Ovary (tissue), 10 donors: ENCODE measurements at regions of chr20 and their contacts with region 1.

Region 1: DNA sequence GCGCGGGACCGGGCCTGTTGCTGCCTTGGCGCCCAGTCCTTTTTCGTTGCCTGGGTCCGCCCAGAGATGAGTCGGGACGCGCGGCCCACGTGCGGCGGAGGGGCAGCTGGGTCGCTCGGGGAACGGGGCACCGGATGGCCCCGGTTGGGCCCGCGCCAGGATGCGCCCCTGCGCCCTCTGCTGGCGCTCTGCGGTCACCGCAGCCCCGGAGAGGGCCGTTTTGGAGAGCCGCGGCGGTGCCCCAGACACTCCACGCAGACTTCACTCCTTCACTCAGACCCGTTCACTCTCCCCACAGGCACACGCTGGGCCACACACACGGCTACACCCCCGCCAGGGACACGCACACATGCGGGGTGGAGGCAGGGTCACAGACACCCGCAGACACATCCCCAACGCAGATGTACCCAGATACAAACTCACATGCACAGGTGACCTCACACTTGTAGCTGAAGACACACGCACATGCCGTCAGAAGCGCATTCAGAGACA is 38.8 kb downstream of the SRC start:
- DNase-seq: peak; percentile 69 to 88 (median 73)
- H3K4me3 ChIP-seq: peak overlapping the region; percentile 37
- H3K27ac ChIP-seq: peak overlapping the region in 1 of 2 donors; percentile 43
- H3K4me1 ChIP-seq: peaks cover 10% of the 10 kb centered on the region
- H3K27me3 ChIP-seq: no peaks in the 10 kb centered on the region
- CTCF ChIP-seq: peak; percentile 76 to 95 (median 94)
- EP300 ChIP-seq: no peak
- POLR2A ChIP-seq: peak; percentile 11

Region 2: GRCh38 chr20:37192137-37192854 is 192.4 kb before region 1 on chr20:
- intact Hi-C with region 1: loop called in 1 of 4 experiments (anchors 10 kb)
- DNase-seq: peak; percentile 84 to 92 (median 90)
- H3K4me3 ChIP-seq: no peak overlapping the region
- H3K27ac ChIP-seq: no peak overlapping the region
- H3K4me1 ChIP-seq: peaks cover 1% of the 10 kb centered on the region
- H3K27me3 ChIP-seq: no peaks in the 10 kb centered on the region
- CTCF ChIP-seq: peak; percentile 79 to 90 (median 84)
- EP300 ChIP-seq: no peak
- POLR2A ChIP-seq: no peak

Region 3: DNA sequence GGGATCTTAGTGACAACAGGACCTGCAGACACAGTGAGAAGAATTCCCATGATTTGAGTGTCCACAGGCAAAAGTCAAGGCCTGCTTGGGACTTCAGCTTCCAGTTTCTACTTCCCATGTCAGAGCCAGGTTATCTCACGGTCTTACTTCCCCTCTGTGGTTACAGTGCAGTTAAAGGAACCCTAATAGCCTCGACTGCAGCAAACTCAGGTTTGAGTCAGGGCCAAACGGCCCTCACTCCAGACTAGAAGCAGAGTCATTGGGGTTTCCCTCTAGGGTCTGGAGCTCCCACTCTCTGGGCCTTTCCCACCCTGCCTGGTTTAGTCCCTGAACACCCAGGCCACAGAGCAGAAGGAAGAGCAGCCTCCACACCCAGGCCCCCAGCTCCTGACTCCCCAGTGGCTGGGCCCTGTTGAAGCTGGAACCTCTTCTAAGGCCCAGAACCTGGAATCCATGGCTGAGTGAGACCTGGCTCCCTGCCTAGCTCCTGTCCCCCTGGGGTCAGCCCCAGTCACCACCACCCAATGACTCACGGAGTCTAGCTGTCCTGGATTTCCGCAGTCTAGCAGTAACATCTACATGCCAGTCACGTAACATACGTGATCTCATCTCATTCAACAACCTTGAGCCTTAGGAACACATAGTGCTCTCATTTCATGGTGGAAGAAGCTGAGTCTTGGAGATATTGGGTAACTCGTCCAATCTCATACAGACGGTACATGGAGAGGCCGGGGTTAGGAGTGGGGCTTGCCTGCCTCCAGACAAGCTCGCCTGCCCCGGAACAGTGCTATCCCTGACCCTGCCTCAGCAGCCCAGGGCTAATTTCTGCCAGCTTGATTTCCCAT is 113.9 kb before region 1 on chr20:
- intact Hi-C with region 1: loop called in 1 of 4 experiments (anchors 2 kb)
- DNase-seq: peak in 1 of 5 donors; percentile 21
- H3K4me3 ChIP-seq: no peak overlapping the region
- H3K27ac ChIP-seq: no peak overlapping the region
- H3K4me1 ChIP-seq: no peaks in the 10 kb centered on the region
- H3K27me3 ChIP-seq: no peaks in the 10 kb centered on the region
- CTCF ChIP-seq: no peak
- EP300 ChIP-seq: no peak
- POLR2A ChIP-seq: no peak

Region 4: DNA sequence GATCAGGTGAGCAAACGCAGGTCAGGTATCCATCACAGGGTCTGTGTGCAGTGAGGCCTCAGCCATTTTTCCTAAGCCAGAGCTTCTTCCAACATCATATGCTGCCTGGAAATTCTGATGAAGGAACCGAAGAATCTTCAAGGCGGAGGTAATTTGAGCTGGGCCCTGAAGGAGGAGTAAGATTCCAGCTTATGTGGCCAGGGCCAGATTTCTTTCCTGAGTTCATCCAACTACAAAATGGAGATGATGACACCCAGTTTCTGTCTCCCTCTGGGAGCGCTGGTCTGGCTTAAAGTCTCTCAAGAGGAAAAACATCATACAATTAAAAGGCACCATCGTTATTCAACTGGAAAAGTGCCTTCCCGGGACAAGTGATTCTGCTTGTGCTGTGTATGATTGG is 102.2 kb before region 1 on chr20:
- intact Hi-C with region 1: loop called (anchors 2 to 5 kb)
- DNase-seq: peak in 1 of 5 donors; percentile 64
- H3K4me3 ChIP-seq: no peak overlapping the region
- H3K27ac ChIP-seq: no peak overlapping the region
- H3K4me1 ChIP-seq: peaks cover 2% of the 10 kb centered on the region
- H3K27me3 ChIP-seq: no peaks in the 10 kb centered on the region
- CTCF ChIP-seq: peak in 2 of 3 donors; percentile 46 to 63
- EP300 ChIP-seq: no peak
- POLR2A ChIP-seq: no peak

Region 5: GRCh38 chr20:37527638-37528441 is 143.1 kb after region 1 on chr20 and contains the start of gene BLCAP:
- intact Hi-C with region 1: loop called in 2 of 4 experiments (anchors 5 to 10 kb)
- DNase-seq: peak; percentile 87 to 93 (median 92)
- H3K4me3 ChIP-seq: peak within 1 kb of the TSS; percentile 87
- H3K27ac ChIP-seq: peak within 1 kb of the TSS; percentile 82 to 96
- H3K4me1 ChIP-seq: peaks cover 13% of the 10 kb centered on the region
- H3K27me3 ChIP-seq: no peaks in the 10 kb centered on the region
- CTCF ChIP-seq: no peak
- EP300 ChIP-seq: no peak
- POLR2A ChIP-seq: no peak
- total RNA-seq, gene BLCAP: 27.7 to 147 (median 62.0) TPM

Region 6: DNA sequence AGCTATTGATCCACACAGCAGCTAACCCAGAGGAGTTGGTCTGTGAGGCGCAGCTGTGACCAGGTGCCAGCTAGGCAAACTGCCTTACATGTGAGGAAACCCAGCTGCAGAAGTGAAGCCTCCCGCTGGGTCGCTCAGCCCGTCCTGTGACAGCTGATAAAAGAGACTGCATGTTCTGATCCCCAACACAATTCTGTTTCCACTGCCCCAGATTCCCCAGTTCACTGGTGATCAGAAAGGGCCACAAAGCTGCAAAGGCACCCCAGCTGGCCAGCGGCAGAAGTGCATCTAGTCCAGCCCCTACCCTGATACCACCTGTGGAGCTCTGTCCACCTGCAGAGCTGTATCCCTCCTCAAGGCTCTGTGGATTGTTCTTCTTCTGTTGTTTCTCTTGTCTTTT is 373.6 kb after region 1 on chr20:
- intact Hi-C with region 1: no loop called
- DNase-seq: no peak
- H3K4me3 ChIP-seq: no peak overlapping the region
- H3K27ac ChIP-seq: no peak overlapping the region
- H3K4me1 ChIP-seq: peaks cover 6% of the 10 kb centered on the region
- H3K27me3 ChIP-seq: no peaks in the 10 kb centered on the region
- CTCF ChIP-seq: no peak
- EP300 ChIP-seq: no peak
- POLR2A ChIP-seq: no peak